ENCODE measurements at regions of chr20 and their contacts with region 1.

Region 1: GRCh38 chr20:50189681-50190582 is 698 bp upstream of the CEBPB start:
- DNase-seq: peak; percentile 50 to 86 (median 74)
- ATAC-seq: peak; percentile 51 to 68 (median 64)
- H3K4me3 ChIP-seq: peak overlapping the region; percentile 11 to 67
- H3K4me3 Mint-ChIP-seq: peak overlapping the region; percentile 49 to 87 (median 67)
- H3K27ac ChIP-seq: no peak overlapping the region
- H3K27ac Mint-ChIP-seq: peak overlapping the region; percentile 11 to 25
- H3K4me1 ChIP-seq: peaks cover 9 to 36% of the 10 kb centered on the region in 2 experiments
- H3K4me1 Mint-ChIP-seq: peaks cover 21 to 30% (median 29%) of the 10 kb centered on the region in 3 donors
- H3K27me3 ChIP-seq: peaks cover 0 to 12% of the 10 kb centered on the region in 2 experiments
- H3K27me3 Mint-ChIP-seq: peaks cover 8 to 10% of the 10 kb centered on the region in 2 donors

Region 2: DNA sequence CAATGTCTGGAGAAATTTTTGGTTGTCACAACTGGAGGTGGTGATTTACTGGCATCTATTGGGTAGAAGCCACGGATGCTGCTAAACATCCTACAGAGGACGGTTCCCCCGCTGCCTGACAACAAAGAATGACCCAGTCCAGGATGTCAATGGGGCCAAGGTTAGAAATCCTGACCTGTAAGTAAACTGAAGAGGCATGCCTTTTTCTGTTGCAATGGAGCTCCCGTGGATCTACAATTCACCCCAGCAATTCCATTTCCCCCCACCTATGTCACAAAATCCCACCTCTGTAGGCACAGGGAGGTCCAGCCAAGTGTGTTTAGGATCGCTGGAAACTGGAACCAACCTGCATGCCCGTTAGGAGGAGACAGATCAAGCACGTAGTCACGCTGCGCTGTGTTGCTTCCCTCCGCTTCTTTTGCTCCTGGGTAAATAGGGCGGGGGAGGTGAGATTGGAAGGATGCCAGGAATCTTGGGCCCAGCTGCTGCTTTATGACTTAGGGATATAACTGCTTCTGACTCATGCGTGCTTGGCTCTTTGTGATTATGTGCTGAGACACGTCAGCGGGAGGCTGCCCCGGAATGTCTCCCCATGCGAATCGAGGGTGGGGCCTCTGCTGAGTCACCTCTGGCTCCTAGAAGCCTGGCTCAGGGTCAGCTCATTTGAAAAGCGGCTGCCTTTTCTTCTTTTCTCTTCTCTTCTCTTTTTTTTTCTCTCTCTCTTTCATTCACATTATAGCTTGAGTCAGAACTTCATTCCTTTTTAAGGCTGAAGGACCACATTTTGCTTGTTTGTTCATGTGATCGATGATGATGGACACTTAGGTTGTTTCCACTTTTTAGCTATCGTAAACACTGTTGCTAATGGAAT is 24.0 kb before region 1 on chr20:
- CTCF ChIA-PET with region 1: interaction called in 1 of 2 experiments, 11 read pairs
- POLR2A ChIA-PET with region 1: no interaction called
- DNase-seq: peak; percentile 14 to 78 (median 38)
- ATAC-seq: peak; percentile 83 to 99 (median 92)
- H3K4me3 ChIP-seq: peak overlapping the region in 1 of 2 donors; percentile 9
- H3K4me3 Mint-ChIP-seq: peak overlapping the region; percentile 41 to 55 (median 54)
- H3K27ac ChIP-seq: no peak overlapping the region
- H3K27ac Mint-ChIP-seq: peak overlapping the region; percentile 28 to 42
- H3K4me1 ChIP-seq: peaks cover 0 to 11% of the 10 kb centered on the region in 2 experiments
- H3K4me1 Mint-ChIP-seq: peaks cover 9 to 14% (median 10%) of the 10 kb centered on the region in 3 donors
- H3K27me3 ChIP-seq: peaks cover 0 to 17% of the 10 kb centered on the region in 2 experiments
- H3K27me3 Mint-ChIP-seq: peaks cover 5 to 7% of the 10 kb centered on the region in 2 donors

Region 3: DNA sequence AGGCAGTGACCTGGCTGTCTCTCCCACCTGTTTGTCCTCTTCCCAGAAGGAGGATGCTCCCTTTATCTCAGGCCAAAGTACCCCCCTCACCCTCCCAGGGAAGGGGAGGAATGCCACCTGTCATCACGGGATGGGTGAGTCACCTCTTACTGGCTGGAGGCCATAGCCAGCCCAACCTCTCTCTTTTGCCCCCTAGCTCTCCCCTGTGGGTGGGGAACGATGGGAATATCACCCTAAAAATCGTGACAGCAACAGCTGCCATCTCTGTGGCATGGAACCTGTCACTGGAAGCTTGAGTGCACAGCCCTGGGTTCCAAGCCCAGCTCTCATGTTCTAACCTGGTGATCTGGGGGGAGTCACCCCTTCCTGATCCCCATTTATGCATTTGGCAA is 182.8 kb after region 1 on chr20:
- CTCF ChIA-PET with region 1: no interaction called
- POLR2A ChIA-PET with region 1: no interaction called
- DNase-seq: no peak
- ATAC-seq: no peak
- H3K4me3 ChIP-seq: no peak overlapping the region
- H3K4me3 Mint-ChIP-seq: no peak overlapping the region
- H3K27ac ChIP-seq: no peak overlapping the region
- H3K27ac Mint-ChIP-seq: no peak overlapping the region
- H3K4me1 ChIP-seq: peaks cover 0 to 5% of the 10 kb centered on the region in 2 experiments
- H3K4me1 Mint-ChIP-seq: peaks cover 0 to 7% (median 5%) of the 10 kb centered on the region in 3 donors
- H3K27me3 ChIP-seq: peaks cover 0 to 23% of the 10 kb centered on the region in 2 experiments
- H3K27me3 Mint-ChIP-seq: peaks cover 5 to 7% of the 10 kb centered on the region in 2 donors

Region 4: GRCh38 chr20:50464026-50464724 is 274.2 kb after region 1 on chr20:
- CTCF ChIA-PET with region 1: interaction called, 7 to 34 read pairs
- POLR2A ChIA-PET with region 1: no interaction called
- DNase-seq: peak in 34 of 35 experiments; percentile 13 to 63 (median 38)
- ATAC-seq: peak; percentile 79 to 81 (median 80)
- H3K4me3 ChIP-seq: no peak overlapping the region
- H3K4me3 Mint-ChIP-seq: no peak overlapping the region
- H3K27ac ChIP-seq: no peak overlapping the region
- H3K27ac Mint-ChIP-seq: peak overlapping the region in 1 of 2 donors; percentile 28
- H3K4me1 ChIP-seq: peaks cover 0 to 8% of the 10 kb centered on the region in 2 experiments
- H3K4me1 Mint-ChIP-seq: peaks cover 6 to 12% (median 7%) of the 10 kb centered on the region in 3 donors
- H3K27me3 ChIP-seq: peaks cover 0 to 12% of the 10 kb centered on the region in 2 experiments
- H3K27me3 Mint-ChIP-seq: peaks cover 0 to 6% of the 10 kb centered on the region in 2 donors